ENCODE measurements at regions of chr1 and their contacts with region 1.

Region 1: DNA sequence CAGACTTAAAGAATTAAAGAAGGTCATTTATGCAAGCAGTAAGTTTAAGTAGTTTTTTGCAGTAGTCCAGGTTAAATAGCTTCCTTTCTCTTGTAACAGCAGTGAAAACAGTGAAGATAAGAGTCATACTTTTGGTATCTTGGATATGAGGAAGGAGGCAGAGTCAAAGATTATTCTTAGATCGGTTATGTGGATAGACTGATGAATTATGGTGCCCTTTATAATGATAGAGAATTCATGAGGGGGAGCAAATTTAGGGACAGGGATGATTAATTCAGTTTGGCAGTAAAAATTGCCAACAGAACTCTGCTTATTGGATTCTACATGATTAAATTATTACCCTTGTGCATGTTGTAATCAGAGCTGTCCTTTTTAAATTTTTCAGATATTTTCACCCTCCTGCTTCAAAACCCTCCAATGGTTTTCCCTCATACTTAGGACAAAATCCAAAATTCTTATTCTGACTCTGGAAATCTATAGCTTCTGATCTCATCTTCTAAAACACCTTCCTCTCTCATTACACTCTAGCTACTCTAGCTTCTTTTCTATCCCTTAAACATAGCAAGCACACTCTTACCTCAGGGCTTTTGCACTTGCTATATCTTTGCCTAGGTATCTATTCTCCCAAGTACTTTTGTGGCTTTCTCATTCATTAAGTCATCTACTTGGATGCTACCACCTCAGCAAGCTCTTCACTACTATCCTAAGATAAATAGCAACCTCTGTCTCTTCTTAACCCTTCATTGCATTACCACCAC is 79.8 kb downstream of the PKN2 start:
- DNase-seq: peak in 1 of 2 experiments; percentile 95
- H3K4me3 ChIP-seq: peak overlapping the region; percentile 9; the same call in 1 of the 2 replicates
- H3K27ac ChIP-seq: peak overlapping the region; percentile 77
- H3K4me1 ChIP-seq: peaks cover 39% of the 10 kb centered on the region
- H3K27me3 ChIP-seq: no peaks in the 10 kb centered on the region
- CTCF ChIP-seq: no peak

Region 2: GRCh38 chr1:87084244-87084836 is 1679.5 kb before region 1 on chr1:
- CTCF ChIA-PET with region 1: no interaction called
- POLR2A ChIA-PET with region 1: interaction called, 12 read pairs
- intact Hi-C with region 1: no loop called
- DNase-seq: peak in 1 of 2 experiments; percentile 59
- H3K4me3 ChIP-seq: no peak overlapping the region
- H3K27ac ChIP-seq: no peak overlapping the region
- H3K4me1 ChIP-seq: no peaks in the 10 kb centered on the region
- H3K27me3 ChIP-seq: no peaks in the 10 kb centered on the region
- CTCF ChIP-seq: peak; percentile 79

Region 3: DNA sequence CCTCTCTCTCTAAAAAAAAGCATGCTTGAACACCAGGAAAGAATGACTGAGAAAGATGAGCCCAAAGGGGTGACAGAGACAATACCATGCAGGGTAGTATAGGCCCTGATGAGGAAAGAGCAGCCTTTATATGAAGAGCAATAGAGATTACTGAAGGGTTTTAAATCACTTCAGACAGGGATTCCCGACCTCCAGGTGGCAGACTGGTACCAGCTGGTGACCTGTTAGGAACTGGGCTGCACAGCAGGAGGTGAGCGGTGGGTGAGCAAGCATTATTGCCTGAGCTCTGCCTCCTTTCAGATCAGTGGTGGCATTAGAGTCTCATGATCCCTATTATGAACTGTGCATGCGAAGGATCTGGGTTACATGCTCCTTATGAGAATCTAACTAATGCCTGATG is 158.4 kb after region 1 on chr1:
- CTCF ChIA-PET with region 1: no interaction called
- POLR2A ChIA-PET with region 1: no interaction called
- intact Hi-C with region 1: no loop called
- DNase-seq: no peak
- H3K4me3 ChIP-seq: no peak overlapping the region
- H3K27ac ChIP-seq: no peak overlapping the region
- H3K4me1 ChIP-seq: no peaks in the 10 kb centered on the region
- H3K27me3 ChIP-seq: no peaks in the 10 kb centered on the region
- CTCF ChIP-seq: no peak